Activated CD8-positive, alpha-beta T cell treated with anti-CD3 and anti-CD28 coated beads, Interleukin-2, amount 10 ng/mL, durations not matched to agents 7 days and 5 days (primary cell): ENCODE measurements at regions of chr1 and their contacts with region 1.

Region 1: DNA sequence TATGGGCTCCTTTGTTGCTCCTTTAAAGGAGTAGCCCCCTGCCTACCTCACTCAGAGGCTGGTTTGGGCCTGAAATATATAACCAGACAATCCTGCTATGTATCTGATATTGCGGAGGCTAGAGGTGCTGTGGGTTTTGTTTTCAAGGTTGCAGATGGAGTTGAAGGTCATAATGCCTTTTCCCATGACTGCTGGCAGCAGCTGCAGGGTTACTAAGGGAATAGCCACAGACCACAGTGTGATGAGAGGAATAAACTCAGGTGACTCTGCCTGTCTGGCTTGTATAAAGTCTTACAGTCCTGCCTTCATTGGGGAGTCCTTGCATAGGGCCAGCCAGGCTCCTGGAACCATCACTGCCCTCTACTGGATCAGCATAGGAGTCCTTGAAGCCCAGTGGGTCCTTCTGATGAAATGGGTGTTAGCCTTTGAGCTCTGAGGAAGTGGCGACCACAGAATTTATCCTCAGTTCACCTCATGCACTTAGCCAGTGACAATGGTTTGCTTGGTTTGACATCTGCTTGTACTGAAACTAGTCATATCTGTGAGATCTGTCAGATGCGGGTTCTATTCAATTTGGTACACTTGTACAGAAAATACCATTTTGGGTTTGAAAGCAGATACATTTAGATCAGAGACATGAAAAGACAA is 174.4 kb upstream of the HMCN1 start:
- DNase-seq: peak; percentile 90
- ATAC-seq: peak; percentile 89
- H3K4me3 Mint-ChIP-seq: peak overlapping the region; percentile 58
- H3K27ac Mint-ChIP-seq: peak overlapping the region; percentile 92
- H3K4me1 Mint-ChIP-seq: peaks cover 55% of the 10 kb centered on the region
- H3K27me3 Mint-ChIP-seq: no peaks in the 10 kb centered on the region

Region 2: DNA sequence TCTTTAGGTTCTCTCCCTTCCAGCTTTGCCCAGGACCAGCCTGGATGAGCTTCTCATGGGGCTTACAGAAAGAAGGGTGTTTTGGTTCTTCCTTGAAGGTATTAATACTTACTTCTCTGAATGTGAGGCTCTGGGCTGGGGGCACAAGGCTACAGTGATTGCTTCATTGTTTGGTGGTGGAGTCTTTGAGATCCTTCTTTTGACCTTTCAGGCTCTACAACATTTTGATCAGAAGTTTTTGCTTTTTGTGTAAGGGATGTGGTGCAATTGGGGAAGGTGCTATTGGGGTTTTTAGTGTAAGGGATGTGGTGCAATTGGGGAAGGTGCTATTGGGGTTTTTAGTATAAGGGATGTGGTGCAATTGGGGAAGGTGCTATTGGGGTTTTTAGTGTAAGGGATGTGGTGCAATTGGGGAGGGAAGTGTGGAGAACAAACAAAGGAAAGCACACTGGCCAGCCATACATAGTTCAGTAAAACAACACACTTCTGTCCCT is 139.2 kb before region 1 on chr1:
- CTCF ChIA-PET with region 1: interaction called, 14 read pairs
- POLR2A ChIA-PET with region 1: interaction called, 10 read pairs
- DNase-seq: peak; percentile 80
- ATAC-seq: peak; percentile 87
- H3K4me3 Mint-ChIP-seq: peak overlapping the region; percentile 60
- H3K27ac Mint-ChIP-seq: peak overlapping the region; percentile 96
- H3K4me1 Mint-ChIP-seq: peaks cover 88% of the 10 kb centered on the region
- H3K27me3 Mint-ChIP-seq: no peaks in the 10 kb centered on the region

Region 3: GRCh38 chr1:185541871-185542301 is 17.9 kb before region 1 on chr1:
- CTCF ChIA-PET with region 1: interaction called, 15 read pairs
- POLR2A ChIA-PET with region 1: no interaction called
- DNase-seq: no peak
- ATAC-seq: no peak
- H3K4me3 Mint-ChIP-seq: no peak overlapping the region
- H3K27ac Mint-ChIP-seq: no peak overlapping the region
- H3K4me1 Mint-ChIP-seq: peaks cover 13% of the 10 kb centered on the region
- H3K27me3 Mint-ChIP-seq: no peaks in the 10 kb centered on the region

Region 4: GRCh38 chr1:185636848-185637247 is 77.0 kb after region 1 on chr1:
- CTCF ChIA-PET with region 1: interaction called, 11 read pairs
- POLR2A ChIA-PET with region 1: interaction called, 7 read pairs
- DNase-seq: peak; percentile 75
- ATAC-seq: peak; percentile 92
- H3K4me3 Mint-ChIP-seq: peak overlapping the region; percentile 12
- H3K27ac Mint-ChIP-seq: peak overlapping the region; percentile 80
- H3K4me1 Mint-ChIP-seq: peaks cover 31% of the 10 kb centered on the region
- H3K27me3 Mint-ChIP-seq: no peaks in the 10 kb centered on the region